B cell (primary cell): ENCODE measurements at regions of chr5 and their contacts with region 1.

Region 1: GRCh38 chr5:95949810-95950209 is 11.8 kb downstream of the ELL2 start:
- DNase-seq: no peak
- ATAC-seq: no peak
- H3K4me3 ChIP-seq: no peak overlapping the region
- H3K4me3 Mint-ChIP-seq: no peak overlapping the region
- H3K27ac ChIP-seq: no peak overlapping the region
- H3K27ac Mint-ChIP-seq: no peak overlapping the region
- H3K4me1 ChIP-seq: no peaks in the 10 kb centered on the region
- H3K4me1 Mint-ChIP-seq: peaks cover 32% of the 10 kb centered on the region
- H3K27me3 ChIP-seq: no peaks in the 10 kb centered on the region
- H3K27me3 Mint-ChIP-seq: no peaks in the 10 kb centered on the region
- CTCF ChIP-seq: no peak

Region 2: GRCh38 chr5:95924720-95925377 is 25.0 kb before region 1 on chr5:
- CTCF ChIA-PET with region 1: no interaction called
- POLR2A ChIA-PET with region 1: no interaction called
- intact Hi-C with region 1: loop called (anchors 2 kb)
- DNase-seq: no peak
- ATAC-seq: no peak
- H3K4me3 ChIP-seq: no peak overlapping the region
- H3K4me3 Mint-ChIP-seq: peak overlapping the region; percentile 30
- H3K27ac ChIP-seq: no peak overlapping the region
- H3K27ac Mint-ChIP-seq: peak overlapping the region; percentile 18
- H3K4me1 ChIP-seq: peaks cover 31 to 33% of the 10 kb centered on the region in 2 donors
- H3K4me1 Mint-ChIP-seq: peaks cover 49% of the 10 kb centered on the region
- H3K27me3 ChIP-seq: no peaks in the 10 kb centered on the region
- H3K27me3 Mint-ChIP-seq: no peaks in the 10 kb centered on the region
- CTCF ChIP-seq: no peak